ENCODE measurements at regions of chr10 and their contacts with region 1.

Region 1: GRCh38 chr10:113704637-113705343 is 25.1 kb downstream of the CASP7 start:
- DNase-seq: peak in 3 of 10 donors; percentile 30 to 56 (median 30)

Region 2: DNA sequence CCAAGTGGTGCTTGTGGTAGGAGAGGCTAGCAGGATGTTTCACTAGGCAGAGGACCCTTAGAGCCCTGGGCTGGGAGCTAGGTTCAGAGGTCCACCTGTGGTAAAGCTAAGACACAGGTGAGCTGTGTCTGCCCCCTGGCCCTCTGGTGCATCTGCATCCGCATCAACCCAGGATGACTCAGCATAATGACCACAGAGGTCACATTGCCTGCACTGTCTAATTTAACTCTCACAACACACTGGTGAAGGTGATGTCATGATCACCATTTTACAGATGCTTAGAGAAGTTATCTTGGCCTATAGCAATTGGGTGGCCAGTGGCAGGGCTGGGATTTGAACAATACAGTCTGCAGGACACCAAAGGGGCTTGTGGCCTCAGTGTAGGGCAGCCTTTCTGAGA is 118.8 kb before region 1 on chr10:
- intact Hi-C with region 1: no loop called
- DNase-seq: no peak

Region 3: DNA sequence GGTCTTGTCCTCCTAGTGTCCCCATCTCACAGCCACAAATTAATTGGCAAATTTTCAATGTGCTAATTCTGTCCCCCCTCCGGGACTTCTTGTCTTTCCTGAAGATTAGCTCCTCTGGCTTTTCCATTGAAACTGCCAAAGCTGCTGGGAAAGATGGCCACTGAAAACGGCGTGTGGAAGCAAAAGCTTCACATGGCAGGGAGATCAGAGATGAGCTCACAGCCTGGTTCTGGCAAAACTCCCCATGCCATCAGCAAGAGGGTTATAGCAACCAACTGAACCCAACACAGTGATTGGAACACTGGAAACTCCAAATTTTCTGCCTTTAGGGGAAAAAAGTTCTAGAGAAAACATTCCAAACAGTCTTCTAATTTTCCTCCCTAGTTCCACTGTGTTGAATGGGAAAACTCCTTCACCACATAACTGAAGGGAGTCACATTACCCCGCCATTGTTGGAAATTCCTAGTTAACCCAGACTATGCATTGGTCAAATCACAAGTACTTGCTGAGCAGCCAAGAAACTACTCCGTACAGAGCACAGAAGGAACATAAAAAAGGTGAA is 77.9 kb before region 1 on chr10:
- intact Hi-C with region 1: no loop called
- DNase-seq: no peak

Region 4: DNA sequence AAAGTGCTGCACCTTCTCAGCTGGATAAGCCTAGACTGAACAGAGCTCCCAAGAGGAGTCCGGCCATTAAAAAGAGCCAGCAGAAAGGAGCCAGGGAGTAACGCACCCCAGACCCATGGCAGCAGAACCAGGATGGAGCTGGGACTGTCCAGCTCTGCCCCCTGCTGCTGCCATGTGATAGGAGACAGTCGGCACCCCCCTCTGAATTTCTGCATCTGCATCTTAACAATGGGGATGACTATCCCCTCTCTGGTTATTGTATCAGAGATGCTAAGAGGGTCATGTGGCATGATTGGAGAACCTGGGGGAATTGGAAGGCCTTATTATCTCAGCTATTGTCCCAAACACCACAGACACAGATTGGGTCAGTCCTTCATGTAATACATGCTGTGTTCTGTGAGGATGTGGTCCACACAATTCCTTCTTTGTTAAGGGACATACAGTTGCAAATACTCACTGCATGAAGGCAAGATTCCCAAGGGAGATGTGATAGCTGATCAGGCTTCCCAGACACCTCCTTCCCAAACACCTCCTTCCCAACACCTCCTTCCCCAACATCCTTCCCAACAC is 76.0 kb after region 1 on chr10:
- intact Hi-C with region 1: loop called (anchors 1 kb)
- DNase-seq: peak in 5 of 10 donors; percentile 14 to 94 (median 35)

Region 5: GRCh38 chr10:113802997-113803396 is 98.2 kb after region 1 on chr10:
- intact Hi-C with region 1: loop called (anchors 5 kb)
- DNase-seq: no peak

Region 6: GRCh38 chr10:113882240-113882639 is 177.4 kb after region 1 on chr10:
- intact Hi-C with region 1: no loop called
- DNase-seq: no peak